HEK293 (cell line): ENCODE measurements at regions of chr2 and their contacts with region 1.

Region 1: GRCh38 chr2:85804583-85804982 is 50.8 kb downstream of the ATOH8 start:
- H3K4me3 ChIP-seq: no peak overlapping the region
- H3K27ac ChIP-seq: no peak overlapping the region
- H3K4me1 ChIP-seq: no peaks in the 10 kb centered on the region
- CTCF ChIP-seq: no peak

Region 2: DNA sequence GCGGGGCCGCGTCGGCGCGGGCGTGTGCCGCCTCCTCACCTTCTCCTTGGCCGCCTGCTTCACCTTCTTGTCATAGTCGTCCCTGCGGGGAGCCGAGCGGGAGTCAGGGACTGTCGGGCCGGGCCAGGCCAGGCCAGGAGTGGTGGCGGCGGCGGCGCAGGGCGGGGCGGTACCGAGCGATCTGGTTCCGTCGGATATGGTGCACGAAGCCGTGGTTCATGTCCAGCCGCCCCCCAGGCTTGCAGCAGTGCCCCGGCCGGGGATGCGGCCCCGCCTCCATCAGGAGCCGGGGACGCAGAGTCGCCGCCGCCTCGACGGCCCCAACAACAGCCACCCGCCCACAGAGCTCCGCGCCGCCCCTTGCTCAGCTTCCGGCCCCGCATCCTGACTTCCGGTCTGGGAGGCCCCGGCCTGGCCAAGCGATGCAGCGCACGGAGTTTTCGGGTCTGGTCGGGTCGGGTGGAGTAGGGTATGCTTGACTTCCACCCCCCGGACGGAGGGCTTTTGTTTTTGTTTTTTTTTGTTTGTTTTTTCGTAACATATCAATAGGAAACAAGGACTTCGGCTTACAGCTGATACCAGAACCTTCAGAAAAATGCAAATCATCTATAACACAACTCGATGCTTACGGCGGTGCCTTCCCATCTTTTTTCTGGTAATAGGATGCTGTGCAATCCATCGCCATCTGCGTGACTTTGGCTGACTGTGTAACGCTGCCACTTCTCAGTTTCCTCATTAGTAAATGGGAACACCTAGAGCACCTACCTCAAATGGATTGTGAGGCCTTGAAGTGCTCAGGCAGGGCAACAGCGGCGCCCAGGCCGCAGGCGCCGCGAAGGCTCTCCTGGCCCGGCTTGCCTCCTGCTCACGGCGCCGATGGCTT is 192.6 kb before region 1 on chr2 and contains the start of gene C2orf68:
- CTCF ChIA-PET with region 1: no interaction called
- POLR2A ChIA-PET with region 1: no interaction called
- H3K4me3 ChIP-seq: peak within 1 kb of the TSS; percentile 79
- H3K27ac ChIP-seq: peak within 1 kb of the TSS; percentile 89
- H3K4me1 ChIP-seq: peaks cover under 1% of the 10 kb centered on the region; the same call in 1 of the 2 replicates
- CTCF ChIP-seq: no peak

Region 3: GRCh38 chr2:85741833-85742455 is 62.6 kb before region 1 on chr2:
- CTCF ChIA-PET with region 1: interaction called, 10 read pairs
- POLR2A ChIA-PET with region 1: interaction called, 3 read pairs
- H3K4me3 ChIP-seq: no peak overlapping the region
- H3K27ac ChIP-seq: peak overlapping the region; percentile 17; the same call in 1 of the 2 replicates
- H3K4me1 ChIP-seq: peaks cover 8% of the 10 kb centered on the region
- CTCF ChIP-seq: no peak